CD14-positive monocyte (primary cell): ENCODE measurements at regions of chr5 and their contacts with region 1.

Region 1: GRCh38 chr5:140113699-140114263 is at the start of gene PURA:
- DNase-seq: peak; percentile 87 to 90 (median 90)
- H3K4me3 ChIP-seq: peak within 1 kb of the TSS; percentile 67 to 91 (median 75)
- H3K4me3 Mint-ChIP-seq: peak within 1 kb of the TSS; percentile 87 to 97
- H3K27ac ChIP-seq: peak within 1 kb of the TSS; percentile 63 to 76
- H3K27ac Mint-ChIP-seq: peak within 1 kb of the TSS; percentile 81 to 94 (median 92)
- H3K4me1 ChIP-seq: peaks cover 35 to 49% of the 10 kb centered on the region in 2 donors
- H3K4me1 Mint-ChIP-seq: peaks cover 61% of the 10 kb centered on the region
- H3K27me3 ChIP-seq: peaks cover 35 to 47% of the 10 kb centered on the region in 2 donors
- H3K27me3 Mint-ChIP-seq: peaks cover 42 to 46% (median 44%) of the 10 kb centered on the region in 3 donors
- CTCF ChIP-seq: no peak
- polyA plus RNA-seq, gene PURA: 1.1 to 1.6 (median 1.2) TPM

Region 2: DNA sequence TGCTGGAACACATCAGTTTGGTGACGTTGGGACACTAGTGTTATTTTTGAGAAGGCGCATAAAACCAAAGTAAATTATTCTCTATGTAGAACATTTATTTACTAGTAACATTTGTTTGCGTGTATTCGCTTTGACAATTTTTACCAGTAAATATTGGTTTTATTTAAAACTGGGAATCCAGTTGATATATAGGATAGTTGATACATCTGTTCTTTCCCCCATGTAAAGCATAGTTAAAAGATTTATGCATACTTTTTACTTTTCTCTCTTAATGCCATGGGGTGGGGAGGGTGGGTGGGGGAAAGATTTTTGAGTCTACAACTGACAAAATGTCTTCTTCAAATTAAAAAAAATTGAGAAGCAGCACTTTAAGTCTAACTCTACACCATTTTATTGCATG is 11.9 kb after region 1 on chr5 and contains the start of gene IGIP:
- intact Hi-C with region 1: loop called in 1 of 2 experiments (anchors 2 kb)
- DNase-seq: no peak
- H3K4me3 ChIP-seq: no peak within 1 kb of the TSS
- H3K4me3 Mint-ChIP-seq: no peak within 1 kb of the TSS
- H3K27ac ChIP-seq: no peak within 1 kb of the TSS
- H3K27ac Mint-ChIP-seq: no peak within 1 kb of the TSS
- H3K4me1 ChIP-seq: no peaks in the 10 kb centered on the region
- H3K4me1 Mint-ChIP-seq: peaks cover 6% of the 10 kb centered on the region
- H3K27me3 ChIP-seq: no peaks in the 10 kb centered on the region
- H3K27me3 Mint-ChIP-seq: peaks cover 0 to 3% (median 1%) of the 10 kb centered on the region in 3 donors
- CTCF ChIP-seq: no peak
- polyA plus RNA-seq, gene IGIP: 0.08 to 0.75 TPM in 2 of 3 donors, not detected in the other

Region 3: GRCh38 chr5:140700177-140701144 is 586.7 kb after region 1 on chr5 and contains the start of gene ZMAT2:
- intact Hi-C with region 1: loop called in 1 of 2 experiments (anchors 10 kb)
- DNase-seq: peak; percentile 95 to 99 (median 98)
- H3K4me3 ChIP-seq: peak within 1 kb of the TSS; percentile 74 to 89 (median 88)
- H3K4me3 Mint-ChIP-seq: peak within 1 kb of the TSS; percentile 96 to 99
- H3K27ac ChIP-seq: peak within 1 kb of the TSS; percentile 74 to 90
- H3K27ac Mint-ChIP-seq: peak within 1 kb of the TSS; percentile 94 to 97 (median 97)
- H3K4me1 ChIP-seq: peaks cover 18 to 22% of the 10 kb centered on the region in 2 donors
- H3K4me1 Mint-ChIP-seq: peaks cover 19% of the 10 kb centered on the region
- H3K27me3 ChIP-seq: no peaks in the 10 kb centered on the region
- H3K27me3 Mint-ChIP-seq: no peaks in the 10 kb centered on the region
- CTCF ChIP-seq: no peak
- polyA plus RNA-seq, gene ZMAT2: 22.5 to 59.5 (median 52.5) TPM